Activated CD4-positive, alpha-beta T cell treated with anti-CD3 and anti-CD28 coated beads for 36 hours (primary cell): ENCODE measurements at regions of chr4 and their contacts with region 1.

Region 1: GRCh38 chr4:77203380-77204197 is 46.6 kb downstream of the CCNG2 start:
- DNase-seq: peak; percentile 77
- ATAC-seq: peak; percentile 73
- H3K4me3 Mint-ChIP-seq: no peak overlapping the region
- H3K27ac Mint-ChIP-seq: no peak overlapping the region
- H3K4me1 Mint-ChIP-seq: peaks cover 3% of the 10 kb centered on the region
- H3K27me3 Mint-ChIP-seq: peaks cover 2% of the 10 kb centered on the region

Region 2: DNA sequence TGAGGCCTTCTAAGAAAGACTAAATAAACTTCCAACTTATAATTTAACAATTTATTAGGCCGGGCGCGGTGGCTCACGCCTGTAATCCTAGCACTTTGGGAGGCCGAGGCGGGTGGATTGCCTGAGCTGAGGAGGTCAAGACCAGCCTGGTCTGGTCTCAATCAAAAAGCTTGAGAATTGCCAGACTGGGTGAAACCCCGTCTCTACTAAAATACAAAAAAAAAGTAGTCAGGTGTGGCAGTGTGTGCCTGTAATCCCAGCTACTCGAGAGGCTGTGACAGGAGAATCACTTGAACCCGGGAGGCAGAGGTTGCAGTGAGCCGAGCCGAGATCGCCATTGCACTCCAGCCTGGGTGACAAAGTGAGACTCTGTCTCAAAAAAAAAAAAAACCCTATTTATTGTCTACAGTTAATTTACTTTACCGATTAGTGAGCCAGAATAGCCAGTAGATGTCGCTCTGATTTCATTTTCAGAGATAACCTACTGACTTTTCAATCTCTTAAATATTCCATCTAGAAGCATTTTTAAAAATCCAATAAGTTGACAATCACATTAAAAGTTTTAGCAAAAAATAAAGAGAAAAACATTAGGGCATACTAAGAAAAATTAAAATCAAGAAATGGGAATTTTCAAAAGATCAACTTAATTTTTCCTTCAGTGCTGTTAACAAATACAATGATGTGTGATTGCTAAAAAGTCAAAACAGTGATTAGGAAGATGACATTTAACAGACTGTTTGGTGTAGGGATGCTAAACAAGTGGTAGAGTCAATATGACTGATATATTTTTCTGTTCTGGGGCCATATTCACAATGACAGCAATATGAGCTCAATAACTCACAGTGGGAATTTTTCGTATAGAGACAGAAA is 772.8 kb before region 1 on chr4:
- CTCF ChIA-PET with region 1: interaction called, 4 read pairs
- POLR2A ChIA-PET with region 1: no interaction called
- intact Hi-C with region 1: loop called in 1 of 2 experiments (anchors 2 kb)
- DNase-seq: peak; percentile 6
- ATAC-seq: peak; percentile 49
- H3K4me3 Mint-ChIP-seq: no peak overlapping the region
- H3K27ac Mint-ChIP-seq: no peak overlapping the region
- H3K4me1 Mint-ChIP-seq: no peaks in the 10 kb centered on the region
- H3K27me3 Mint-ChIP-seq: peaks cover 20% of the 10 kb centered on the region

Region 3: DNA sequence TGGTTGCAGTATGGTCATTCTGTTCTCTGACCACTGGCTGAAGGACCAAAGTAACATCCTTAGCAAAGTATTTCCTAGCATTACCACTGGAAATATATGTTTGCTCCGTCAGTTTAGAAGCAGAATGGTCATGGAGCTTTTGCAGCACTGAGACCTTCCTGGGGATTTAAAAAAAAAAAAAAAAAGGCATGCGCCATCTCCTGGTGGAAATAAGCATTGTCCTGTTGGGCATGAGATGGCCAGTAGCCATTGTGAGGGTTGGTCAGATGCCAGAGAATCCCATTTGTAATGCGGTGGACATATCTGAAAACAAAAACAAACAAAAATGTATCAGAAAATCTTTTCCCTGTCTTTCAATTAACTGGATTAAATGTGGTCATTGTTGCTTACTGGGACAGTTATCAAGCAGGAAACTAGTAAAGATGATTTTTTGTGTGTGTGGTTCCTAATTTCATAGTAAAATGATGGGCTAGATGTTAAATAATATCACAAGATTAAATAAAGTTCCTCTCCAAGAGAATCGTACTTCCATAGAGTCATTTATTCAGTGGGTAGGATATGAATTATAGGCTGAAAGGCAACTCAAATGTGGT is 445.2 kb before region 1 on chr4:
- CTCF ChIA-PET with region 1: no interaction called
- POLR2A ChIA-PET with region 1: no interaction called
- intact Hi-C with region 1: loop called in 1 of 2 experiments (anchors 1 kb)
- DNase-seq: no peak
- ATAC-seq: no peak
- H3K4me3 Mint-ChIP-seq: no peak overlapping the region
- H3K27ac Mint-ChIP-seq: no peak overlapping the region
- H3K4me1 Mint-ChIP-seq: peaks cover 14% of the 10 kb centered on the region
- H3K27me3 Mint-ChIP-seq: peaks cover 11% of the 10 kb centered on the region

Region 4: DNA sequence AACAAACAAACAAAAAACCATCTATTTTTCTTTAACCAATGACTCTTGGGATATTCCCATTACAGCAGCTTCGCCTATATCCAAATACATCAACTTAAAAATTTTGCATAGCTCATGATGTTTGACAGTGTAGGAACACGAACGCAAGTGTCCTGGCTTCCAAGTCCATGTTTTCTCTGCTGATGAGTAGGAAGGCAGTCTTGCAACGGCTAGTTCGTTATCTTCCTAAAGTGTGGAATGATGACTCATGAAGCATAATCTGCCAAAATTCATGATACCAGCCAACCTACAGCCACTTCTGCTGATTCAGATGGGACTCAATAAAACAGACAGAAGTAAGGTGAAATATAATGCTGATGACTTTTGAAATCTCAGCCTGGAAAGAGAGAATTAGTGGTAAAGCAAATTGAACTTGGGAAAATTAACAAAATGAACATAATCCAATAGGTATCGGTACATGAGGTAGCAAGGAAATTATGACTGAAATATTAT is 260.4 kb before region 1 on chr4:
- CTCF ChIA-PET with region 1: interaction called, 3 read pairs
- POLR2A ChIA-PET with region 1: no interaction called
- intact Hi-C with region 1: loop called in 1 of 2 experiments (anchors 5 kb)
- DNase-seq: no peak
- ATAC-seq: no peak
- H3K4me3 Mint-ChIP-seq: no peak overlapping the region
- H3K27ac Mint-ChIP-seq: no peak overlapping the region
- H3K4me1 Mint-ChIP-seq: no peaks in the 10 kb centered on the region
- H3K27me3 Mint-ChIP-seq: peaks cover 2% of the 10 kb centered on the region

Region 5: DNA sequence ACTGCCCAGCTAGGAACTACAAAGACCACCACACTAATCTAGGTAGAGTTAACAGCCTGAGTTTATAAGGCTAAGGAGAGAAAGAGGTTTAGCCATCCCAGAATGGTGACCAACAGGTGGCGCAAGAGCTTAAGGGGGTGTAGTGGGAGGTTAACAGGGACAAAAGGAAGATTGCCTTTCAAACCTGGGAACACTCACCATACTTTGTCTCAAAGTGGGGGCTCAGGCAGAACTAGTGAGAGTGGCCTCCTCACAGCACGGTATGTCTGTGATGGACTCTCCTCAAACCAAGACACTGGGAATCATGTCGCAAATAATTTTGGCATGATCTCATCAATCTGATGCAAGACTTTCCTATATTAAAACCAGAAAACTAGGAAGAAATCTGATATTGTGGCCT is 151.2 kb before region 1 on chr4:
- CTCF ChIA-PET with region 1: interaction called, 52 read pairs
- POLR2A ChIA-PET with region 1: no interaction called
- intact Hi-C with region 1: loop called (anchors 1 to 2 kb)
- DNase-seq: peak; percentile 65
- ATAC-seq: no peak
- H3K4me3 Mint-ChIP-seq: no peak overlapping the region
- H3K27ac Mint-ChIP-seq: no peak overlapping the region
- H3K4me1 Mint-ChIP-seq: no peaks in the 10 kb centered on the region
- H3K27me3 Mint-ChIP-seq: no peaks in the 10 kb centered on the region

Region 6: DNA sequence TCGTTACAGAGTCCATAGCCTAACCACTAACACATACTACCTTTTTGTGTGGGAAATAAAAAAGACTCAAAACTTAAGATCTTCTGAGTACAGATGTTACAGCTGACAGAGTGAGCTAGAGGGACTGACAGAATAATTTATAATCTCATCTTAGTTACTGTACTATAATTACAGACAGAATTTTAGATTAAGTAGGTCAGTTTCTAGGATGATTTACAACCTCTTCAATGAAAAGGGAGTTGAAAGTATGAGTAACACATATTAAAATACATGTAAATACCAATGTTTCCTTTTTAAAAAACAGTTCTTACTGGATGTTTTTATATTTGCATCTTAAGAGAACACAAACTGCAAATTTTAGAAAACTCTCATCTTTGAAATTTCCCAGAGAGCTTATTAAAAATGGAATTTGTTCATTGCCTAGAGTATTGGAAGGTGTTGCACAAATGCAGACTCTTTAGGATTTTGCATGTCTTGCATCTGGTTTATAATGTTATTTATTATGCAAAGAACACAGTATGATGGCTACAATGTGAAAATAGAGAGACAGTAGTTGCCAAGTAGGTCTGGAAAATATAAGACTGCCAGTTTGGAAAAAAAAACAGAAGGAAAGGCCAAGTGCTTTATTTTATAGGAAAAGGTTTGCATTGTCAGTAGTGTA is 70.8 kb before region 1 on chr4:
- CTCF ChIA-PET with region 1: interaction called, 11 read pairs
- POLR2A ChIA-PET with region 1: interaction called, 3 read pairs
- intact Hi-C with region 1: no loop called
- DNase-seq: no peak
- ATAC-seq: no peak
- H3K4me3 Mint-ChIP-seq: no peak overlapping the region
- H3K27ac Mint-ChIP-seq: no peak overlapping the region
- H3K4me1 Mint-ChIP-seq: no peaks in the 10 kb centered on the region
- H3K27me3 Mint-ChIP-seq: no peaks in the 10 kb centered on the region